Left colon (tissue), 2 donors: ENCODE measurements at regions of chr4 and their contacts with region 1.

Region 1: GRCh38 chr4:20773144-20773997 is 73.1 kb downstream of the PACRGL start:
- DNase-seq: peak in 1 of 2 donors; percentile 18
- ATAC-seq: peak; percentile 80

Region 2: DNA sequence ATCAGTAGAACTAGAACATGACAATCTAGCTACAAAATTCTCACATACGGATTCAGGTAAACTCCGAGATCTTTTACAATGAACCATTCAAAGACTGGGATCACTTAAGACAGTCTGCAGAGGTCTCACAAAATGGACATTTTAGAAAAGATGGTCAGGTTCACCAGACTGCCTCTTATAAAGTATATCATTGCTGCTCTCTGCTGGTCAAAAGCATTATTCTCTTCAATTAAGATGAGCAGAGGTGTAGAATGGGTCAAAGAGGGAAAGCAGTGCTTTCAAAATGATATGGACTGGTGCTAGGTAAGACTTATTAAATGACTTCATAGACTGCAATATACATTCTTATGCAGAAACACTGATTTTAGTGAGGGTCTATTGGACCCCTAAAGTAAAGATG is 361.6 kb after region 1 on chr4:
- intact Hi-C with region 1: loop called in 1 of 2 experiments (anchors 5 kb)
- DNase-seq: no peak
- ATAC-seq: peak; percentile 64